Adrenal gland (tissue), 19 donors: ENCODE measurements at regions of chr1 and their contacts with region 1.

Region 1: GRCh38 chr1:25223471-25223870 is 8.8 kb downstream of the SYF2 start:
- DNase-seq: peak in 1 of 7 donors; percentile 30
- H3K4me3 ChIP-seq: no peak overlapping the region
- H3K27ac ChIP-seq: no peak overlapping the region
- H3K4me1 ChIP-seq: no peaks in the 10 kb centered on the region
- H3K27me3 ChIP-seq: no peaks in the 10 kb centered on the region
- CTCF ChIP-seq: no peak
- POLR2A ChIP-seq: no peak

Region 2: DNA sequence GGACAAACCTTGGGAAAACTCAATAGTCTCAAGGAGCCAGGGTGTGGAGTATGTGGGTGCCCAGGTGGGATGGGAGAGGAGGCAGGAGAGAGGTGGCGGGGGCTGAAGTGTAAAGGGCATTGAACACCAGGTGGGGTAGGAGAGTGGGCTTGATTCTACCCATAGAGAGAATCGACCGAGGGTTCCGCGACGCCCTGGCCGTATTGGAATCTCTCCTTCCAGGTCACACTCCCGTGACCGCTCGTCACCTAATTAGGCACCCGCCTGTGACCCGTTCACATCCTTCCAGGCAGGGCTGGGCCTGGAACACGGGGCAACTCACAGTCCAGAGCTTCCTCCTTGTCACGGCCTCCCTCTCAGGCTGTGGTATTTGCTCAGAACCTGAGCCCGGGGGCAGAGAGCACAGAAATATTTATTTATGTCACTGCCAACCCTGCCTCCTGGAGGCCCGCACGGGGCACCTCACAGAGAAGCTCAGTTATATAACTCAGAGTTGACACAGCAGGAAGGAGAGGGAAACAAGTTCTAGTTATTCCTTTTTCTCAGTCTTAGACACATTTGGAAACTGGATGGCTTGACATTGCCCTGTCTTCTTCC is 655.6 kb before region 1 on chr1:
- intact Hi-C with region 1: no loop called
- DNase-seq: peak in 1 of 7 donors; percentile 52
- H3K4me3 ChIP-seq: no peak overlapping the region
- H3K27ac ChIP-seq: no peak overlapping the region
- H3K4me1 ChIP-seq: no peaks in the 10 kb centered on the region
- H3K27me3 ChIP-seq: no peaks in the 10 kb centered on the region
- CTCF ChIP-seq: no peak
- POLR2A ChIP-seq: no peak

Region 3: DNA sequence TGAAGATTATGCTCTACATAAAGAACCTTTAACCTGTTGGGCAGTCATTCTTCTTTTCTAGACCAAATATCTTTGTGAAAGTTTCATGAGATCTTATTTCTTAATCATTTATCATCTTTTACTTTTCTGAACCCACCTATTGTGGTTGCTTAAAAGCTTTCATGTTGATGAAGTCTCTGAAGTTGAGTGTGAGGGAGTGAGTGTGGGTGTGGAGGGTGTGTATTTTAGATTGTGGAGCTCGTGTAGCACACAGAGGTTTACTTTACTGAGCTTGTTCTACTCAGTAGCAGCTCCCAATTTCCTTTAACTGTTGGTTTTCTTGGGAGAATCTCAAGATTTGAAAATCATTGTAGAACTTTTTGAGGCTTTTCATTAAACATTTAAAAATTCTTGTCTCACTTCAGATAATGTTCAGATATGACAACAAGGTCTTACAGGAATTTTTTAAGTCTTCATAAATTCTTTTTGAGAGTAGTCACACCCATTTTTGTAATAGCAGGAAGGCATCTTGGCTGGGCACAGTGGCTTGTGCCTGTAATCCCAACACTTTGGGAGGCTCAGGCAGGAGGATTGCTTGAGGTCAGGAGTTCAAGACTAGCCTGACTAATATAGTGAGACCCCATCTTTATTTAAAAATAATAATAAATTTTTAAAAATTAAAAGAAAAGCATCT is 563.3 kb before region 1 on chr1:
- intact Hi-C with region 1: loop called in 1 of 2 experiments (anchors 10 kb)
- DNase-seq: no peak
- H3K4me3 ChIP-seq: no peak overlapping the region
- H3K27ac ChIP-seq: no peak overlapping the region
- H3K4me1 ChIP-seq: peaks cover 0 to 23% of the 10 kb centered on the region in 2 donors
- H3K27me3 ChIP-seq: no peaks in the 10 kb centered on the region
- CTCF ChIP-seq: no peak
- POLR2A ChIP-seq: no peak

Region 4: DNA sequence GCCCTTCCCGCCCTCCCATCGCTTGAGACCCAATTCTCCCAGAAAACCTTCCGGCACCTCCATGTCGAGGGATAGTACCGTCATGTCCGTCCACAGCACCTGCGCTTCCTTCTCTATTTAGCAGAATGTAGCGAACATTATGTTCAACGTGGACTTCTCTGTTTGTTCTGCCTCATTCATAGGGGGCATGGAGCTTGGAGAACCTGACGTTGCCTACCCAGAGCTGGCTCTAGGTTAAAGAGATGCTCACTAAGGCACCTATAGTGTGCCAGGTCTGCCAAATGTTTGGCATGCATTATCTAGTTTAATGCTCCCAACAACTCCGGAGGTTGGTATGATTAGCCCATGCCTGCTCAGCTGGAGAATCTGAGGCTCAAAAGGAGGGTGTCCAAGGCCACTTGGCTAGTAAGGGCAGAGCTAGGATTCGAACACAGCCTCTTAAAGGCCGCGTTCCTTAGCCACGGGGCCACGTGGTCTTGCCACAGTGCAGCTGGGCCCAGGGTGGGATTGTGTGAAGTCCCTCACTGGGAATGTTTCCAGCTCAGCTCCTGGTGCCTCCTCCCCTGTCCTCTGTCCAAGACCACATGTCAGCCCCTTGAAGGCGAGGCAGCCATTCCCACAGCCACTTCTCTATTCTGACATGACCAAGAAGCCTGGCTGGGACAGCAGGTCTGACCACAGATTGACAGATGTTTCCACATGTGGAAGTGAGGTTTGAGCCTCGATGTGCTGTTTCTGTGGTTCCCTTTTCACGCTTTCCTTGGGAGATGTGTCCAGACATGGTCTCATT is 351.2 kb before region 1 on chr1:
- intact Hi-C with region 1: no loop called
- DNase-seq: peak in 4 of 7 donors; percentile 30 to 55 (median 34)
- H3K4me3 ChIP-seq: no peak overlapping the region
- H3K27ac ChIP-seq: no peak overlapping the region
- H3K4me1 ChIP-seq: no peaks in the 10 kb centered on the region
- H3K27me3 ChIP-seq: peaks cover 11% of the 10 kb centered on the region
- CTCF ChIP-seq: no peak
- POLR2A ChIP-seq: no peak

Region 5: GRCh38 chr1:25161981-25162380 is 61.5 kb before region 1 on chr1:
- intact Hi-C with region 1: no loop called
- DNase-seq: no peak
- H3K4me3 ChIP-seq: no peak overlapping the region
- H3K27ac ChIP-seq: no peak overlapping the region
- H3K4me1 ChIP-seq: no peaks in the 10 kb centered on the region
- H3K27me3 ChIP-seq: no peaks in the 10 kb centered on the region
- CTCF ChIP-seq: no peak
- POLR2A ChIP-seq: no peak